AG04450 (cell line): ENCODE measurements at regions of chr11 and their contacts with region 1.

Region 1: GRCh38 chr11:10307442-10308207 is 2.8 kb downstream of the ADM start:
- DNase-seq: peak; percentile 76
- H3K4me3 ChIP-seq: peak overlapping the region; percentile 77
- H3K27ac ChIP-seq: peak overlapping the region; percentile 89
- H3K27me3 ChIP-seq: no peaks in the 10 kb centered on the region
- CTCF ChIP-seq: peak; percentile 94

Region 2: DNA sequence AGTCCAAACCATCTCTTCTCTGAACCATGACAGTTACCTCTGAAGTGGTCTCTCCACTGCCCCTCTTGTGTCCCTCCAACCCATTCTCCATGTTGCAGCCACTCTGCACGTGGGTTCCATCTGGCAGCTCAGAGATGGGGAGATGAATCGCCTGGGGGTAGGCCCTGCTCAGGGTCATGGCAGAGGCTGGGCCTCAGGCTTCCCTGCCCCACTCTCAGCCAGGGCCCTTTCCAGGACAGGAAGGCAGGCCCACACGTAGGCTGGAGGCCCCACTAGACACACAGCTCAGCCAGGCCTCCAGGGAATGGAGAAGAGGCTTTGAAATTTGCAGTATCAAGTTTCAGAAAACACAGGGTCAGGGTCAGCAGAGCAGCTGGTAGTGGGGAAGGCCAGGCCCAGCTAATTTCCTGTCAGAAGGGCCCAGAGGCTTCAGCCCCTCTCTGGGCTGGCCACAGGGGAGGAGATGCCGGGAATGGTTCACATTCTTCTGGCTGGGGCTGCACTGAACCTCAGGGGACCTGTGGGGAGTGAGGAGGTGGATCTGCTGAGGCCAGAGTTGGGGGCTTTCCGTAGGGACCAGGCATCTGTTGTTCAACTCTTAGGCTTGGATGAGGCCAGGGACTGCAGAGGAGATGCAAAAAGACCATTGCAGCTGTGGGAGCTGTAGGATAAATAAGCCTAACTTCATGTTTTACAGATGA is 542.2 kb before region 1 on chr11:
- CTCF ChIA-PET with region 1: no interaction called
- POLR2A ChIA-PET with region 1: interaction called, 65 read pairs
- DNase-seq: peak; percentile 90
- H3K4me3 ChIP-seq: no peak overlapping the region
- H3K27ac ChIP-seq: peak overlapping the region; percentile 99
- H3K27me3 ChIP-seq: no peaks in the 10 kb centered on the region
- CTCF ChIP-seq: no peak

Region 3: DNA sequence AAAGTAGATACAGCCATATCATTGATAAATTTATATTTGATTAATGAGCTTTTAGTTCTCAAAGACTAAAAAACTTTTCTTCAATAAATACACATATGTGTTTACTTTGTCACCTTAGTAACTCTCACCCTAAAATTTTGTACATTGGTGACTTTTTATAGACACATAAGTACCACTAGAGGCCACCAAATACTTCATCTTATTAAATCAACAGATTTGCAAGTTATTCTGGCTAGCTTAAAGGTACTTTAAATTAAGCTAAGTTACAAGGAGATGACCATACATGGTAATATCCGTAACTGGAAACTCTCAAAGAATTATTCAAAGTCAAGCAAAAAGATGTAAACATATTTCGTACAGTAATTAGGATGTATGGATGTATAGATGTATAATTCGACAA is 125.8 kb before region 1 on chr11:
- CTCF ChIA-PET with region 1: interaction called, 11 read pairs
- POLR2A ChIA-PET with region 1: interaction called, 4 read pairs
- DNase-seq: no peak
- H3K4me3 ChIP-seq: no peak overlapping the region
- H3K27ac ChIP-seq: no peak overlapping the region
- H3K27me3 ChIP-seq: no peaks in the 10 kb centered on the region
- CTCF ChIP-seq: peak; percentile 19; the same call in 1 of the 2 replicates

Region 4: DNA sequence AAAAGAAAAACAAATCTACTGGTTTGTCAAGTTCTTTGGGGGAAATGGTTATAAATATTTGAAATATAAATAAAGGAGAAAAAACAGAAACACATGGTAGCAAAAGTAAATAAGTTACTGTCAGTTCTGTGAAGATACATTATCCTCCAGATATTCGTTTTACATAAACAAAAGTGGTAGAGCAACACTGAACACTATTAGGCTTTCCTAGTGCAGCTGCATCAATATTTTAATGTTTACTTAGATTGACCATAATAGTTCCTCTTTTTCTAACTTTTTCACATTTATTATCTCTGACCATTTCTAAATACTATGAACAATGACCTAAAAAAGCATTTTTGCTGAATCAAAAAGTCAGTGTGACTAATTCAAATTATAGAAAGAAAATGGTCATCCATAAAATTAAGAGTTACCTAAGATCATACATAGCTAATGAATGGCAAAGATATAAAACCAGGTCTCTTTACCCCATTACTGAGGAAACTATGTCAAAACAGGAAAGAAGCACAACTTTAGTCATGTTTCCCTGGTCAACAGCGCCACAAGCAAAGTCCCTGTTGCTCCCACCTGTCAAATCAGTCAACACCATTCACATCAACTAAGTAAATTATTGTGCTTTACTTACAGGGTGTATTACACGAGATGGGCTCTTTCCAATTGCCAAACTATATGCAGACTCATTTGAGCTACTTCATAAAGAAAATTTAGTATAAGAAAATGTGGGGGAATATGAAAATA is 52.1 kb before region 1 on chr11:
- CTCF ChIA-PET with region 1: no interaction called
- POLR2A ChIA-PET with region 1: interaction called, 15 read pairs
- DNase-seq: no peak
- H3K4me3 ChIP-seq: no peak overlapping the region
- H3K27ac ChIP-seq: no peak overlapping the region
- H3K27me3 ChIP-seq: no peaks in the 10 kb centered on the region
- CTCF ChIP-seq: no peak

Region 5: DNA sequence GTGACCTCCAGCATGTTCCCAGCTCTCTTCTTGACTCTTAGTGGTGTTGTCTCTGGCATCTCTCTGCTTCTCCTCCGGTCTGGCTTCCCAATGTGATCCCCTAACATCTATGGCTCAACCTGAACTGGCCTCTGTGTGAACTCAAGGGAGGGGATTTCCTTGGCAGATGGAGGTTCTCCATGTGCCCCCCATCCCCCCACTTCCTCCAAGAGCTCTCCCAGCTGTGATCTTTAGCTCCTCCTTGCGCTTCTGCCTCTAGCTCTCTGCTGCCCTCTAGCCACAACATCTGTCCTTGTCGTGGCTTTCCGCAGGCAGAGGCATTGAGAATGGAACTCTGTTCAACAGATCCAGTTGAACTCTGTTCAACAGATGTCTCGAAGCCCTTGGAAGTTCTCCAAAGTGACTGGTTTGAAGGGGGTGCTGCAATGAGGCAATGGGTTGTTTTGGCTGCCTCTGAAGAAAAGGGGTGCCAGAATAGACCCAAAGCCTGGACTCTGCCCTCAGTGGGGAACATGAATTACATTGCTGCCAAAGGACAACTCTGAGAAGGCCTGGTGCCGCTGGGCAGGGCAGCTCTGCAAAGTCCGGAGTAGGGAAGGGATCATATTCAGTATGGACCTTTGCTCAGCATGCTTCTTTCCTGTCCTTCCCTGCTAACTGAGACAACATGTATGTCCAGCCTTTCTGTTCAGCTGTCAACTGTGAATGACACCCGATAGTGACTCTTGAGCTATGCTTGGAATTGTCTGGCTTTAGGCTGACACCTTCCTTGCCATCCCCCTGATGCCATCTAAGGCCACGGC is 59.1 kb after region 1 on chr11:
- CTCF ChIA-PET with region 1: interaction called, 26 read pairs
- POLR2A ChIA-PET with region 1: interaction called, 38 read pairs
- DNase-seq: peak; percentile 98
- H3K4me3 ChIP-seq: no peak overlapping the region
- H3K27ac ChIP-seq: peak overlapping the region; percentile 73
- H3K27me3 ChIP-seq: no peaks in the 10 kb centered on the region
- CTCF ChIP-seq: peak; percentile 97

Region 6: DNA sequence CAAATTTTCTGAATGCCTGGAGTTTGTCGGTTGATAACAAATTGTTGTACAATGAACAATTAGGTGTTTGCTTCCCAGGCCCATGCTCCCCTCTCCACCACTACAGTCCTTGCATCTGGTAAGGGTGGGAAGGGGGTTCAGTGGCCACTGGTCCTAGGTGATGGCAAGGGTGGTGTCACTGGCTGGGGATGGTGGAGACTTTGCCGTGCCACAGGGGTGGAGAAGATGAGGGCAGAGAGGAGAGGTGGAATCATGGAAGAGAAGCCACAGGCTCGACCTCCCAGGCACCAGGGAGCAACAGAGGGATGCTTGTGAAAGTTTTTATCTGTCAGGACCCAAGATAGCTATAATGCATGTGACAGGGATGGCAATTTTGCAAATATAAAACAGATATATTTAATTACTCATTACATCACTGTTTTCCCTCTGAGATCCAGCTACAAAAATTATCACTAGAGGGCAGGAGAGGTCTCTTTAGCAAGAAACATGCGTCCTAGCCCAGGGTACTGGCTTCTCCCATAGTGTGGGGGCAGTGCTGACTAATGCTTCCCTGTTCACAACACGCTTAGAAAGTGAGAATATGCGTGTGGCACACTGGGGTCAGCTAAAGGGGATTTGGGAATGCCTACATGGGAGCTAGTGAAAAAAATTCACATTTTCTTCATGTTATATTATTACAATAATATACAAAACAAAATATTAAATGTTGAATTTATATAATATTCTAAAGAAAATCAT is 98.4 kb after region 1 on chr11:
- CTCF ChIA-PET with region 1: interaction called, 10 read pairs
- POLR2A ChIA-PET with region 1: interaction called, 6 read pairs
- DNase-seq: peak; percentile 77
- H3K4me3 ChIP-seq: no peak overlapping the region
- H3K27ac ChIP-seq: no peak overlapping the region
- H3K27me3 ChIP-seq: no peaks in the 10 kb centered on the region
- CTCF ChIP-seq: peak; percentile 81

Region 7: DNA sequence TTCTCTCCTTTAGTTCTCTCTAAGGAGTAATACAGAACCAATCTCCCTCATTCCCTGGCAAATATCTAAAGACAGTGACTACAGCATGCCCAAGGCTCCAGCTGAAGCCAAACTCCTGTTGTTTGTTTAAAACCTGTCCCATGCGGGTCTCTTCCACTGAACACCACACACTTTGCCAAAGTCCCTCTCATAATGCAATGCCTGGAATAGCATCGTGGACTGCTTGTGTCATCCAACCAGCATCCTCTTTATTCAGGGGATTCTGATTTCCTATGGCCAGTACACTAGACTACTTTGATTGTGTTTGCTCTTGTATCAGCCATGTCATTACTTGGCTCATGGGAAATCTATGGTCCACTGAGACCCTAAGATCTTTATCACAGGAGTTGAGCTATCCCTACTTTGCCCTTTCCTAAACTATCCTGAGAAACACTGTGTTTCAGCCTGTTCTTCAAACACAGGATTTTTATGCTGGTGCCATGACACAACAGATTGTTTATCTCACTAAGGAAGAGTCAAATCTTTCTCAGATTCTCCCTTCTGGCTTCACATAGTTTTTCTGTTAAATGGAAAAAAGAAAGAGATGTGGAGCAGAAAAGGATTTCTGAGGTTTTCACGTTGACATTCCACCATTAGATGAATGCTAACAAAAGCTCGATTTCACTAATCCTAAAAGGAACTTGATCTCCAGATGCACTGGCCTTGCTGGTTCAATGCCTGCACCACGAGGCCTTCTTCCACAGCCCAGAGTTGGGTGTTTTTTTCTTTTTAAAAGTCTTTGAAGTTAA is 401.9 kb after region 1 on chr11:
- CTCF ChIA-PET with region 1: no interaction called
- POLR2A ChIA-PET with region 1: no interaction called
- DNase-seq: peak; percentile 72
- H3K4me3 ChIP-seq: no peak overlapping the region
- H3K27ac ChIP-seq: peak overlapping the region; percentile 69
- H3K27me3 ChIP-seq: no peaks in the 10 kb centered on the region
- CTCF ChIP-seq: no peak